Activated CD4-positive, alpha-beta T cell treated with anti-CD3 and anti-CD28 coated beads for 36 hours (primary cell): ENCODE measurements at regions of chr9 and their contacts with region 1.

Region 1: DNA sequence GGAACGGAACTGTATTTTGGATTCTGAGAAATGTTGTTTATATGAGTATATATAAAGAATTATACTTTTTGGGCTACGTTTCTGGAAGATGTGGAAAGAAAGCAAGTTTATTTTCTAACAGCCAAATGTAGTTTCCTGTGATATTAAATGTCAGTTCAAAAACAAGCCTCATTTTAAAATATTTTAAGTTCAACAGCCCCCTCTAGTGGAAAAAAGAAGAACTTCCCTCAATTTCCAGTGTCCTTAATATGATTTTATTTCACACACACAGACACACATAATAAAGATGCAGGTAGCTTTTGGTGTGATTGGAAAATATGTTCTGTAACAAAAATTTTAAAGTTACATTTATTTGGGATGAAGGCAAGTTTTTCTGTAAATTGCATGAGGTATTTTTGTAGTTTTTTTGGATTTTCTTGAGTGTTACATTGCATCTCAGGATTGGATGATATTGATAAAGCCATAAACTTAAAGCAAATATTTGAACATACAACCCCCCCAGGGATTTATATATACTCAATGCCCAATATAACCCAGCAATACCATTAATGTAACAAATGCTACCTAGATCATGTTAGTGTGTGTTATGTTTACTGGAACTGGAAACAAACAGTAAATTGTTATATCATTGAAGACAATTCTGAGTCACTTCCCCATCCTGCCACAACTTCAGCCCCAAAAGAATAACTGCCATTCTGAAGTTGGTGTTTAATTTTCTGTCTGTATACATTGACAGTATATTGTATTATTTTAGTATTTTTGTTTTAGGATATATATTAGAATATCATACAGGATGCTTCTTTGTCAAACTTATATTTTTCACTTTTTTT is 54.0 kb downstream of the CCDC171 start:
- DNase-seq: no peak
- ATAC-seq: no peak
- H3K4me3 Mint-ChIP-seq: no peak overlapping the region
- H3K27ac Mint-ChIP-seq: no peak overlapping the region
- H3K4me1 Mint-ChIP-seq: no peaks in the 10 kb centered on the region
- H3K27me3 Mint-ChIP-seq: no peaks in the 10 kb centered on the region

Region 2: DNA sequence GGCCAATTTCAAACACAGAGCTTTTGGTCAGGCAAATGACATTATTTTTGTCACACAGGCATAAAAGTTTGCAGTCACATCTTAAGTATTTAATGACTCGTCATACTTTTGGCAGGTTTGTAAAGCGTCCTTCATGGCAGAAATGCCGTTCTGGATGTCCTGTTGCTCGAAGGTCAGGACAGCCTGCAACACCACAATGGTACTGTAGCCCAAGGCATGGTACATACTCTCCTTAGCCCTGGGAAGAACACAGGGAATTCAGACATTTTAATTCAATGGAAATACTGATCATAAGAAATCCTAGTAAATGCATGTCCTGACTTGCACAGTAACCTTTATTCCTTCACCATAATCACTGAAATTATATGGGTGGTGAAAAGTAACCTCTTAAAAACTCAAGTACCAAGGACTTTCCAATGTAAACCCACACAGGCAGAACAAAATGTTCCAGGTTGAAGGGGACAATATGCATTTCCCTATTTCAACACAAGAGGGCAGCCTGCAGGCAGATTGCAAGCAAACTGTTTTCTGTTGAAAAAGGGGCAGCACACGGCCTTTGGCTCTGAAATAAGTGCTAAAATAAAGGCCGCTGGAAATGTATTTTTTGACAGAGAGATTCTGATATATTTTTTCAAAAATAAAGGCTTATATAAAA is 395.6 kb before region 1 on chr9:
- CTCF ChIA-PET with region 1: interaction called, 8 read pairs
- POLR2A ChIA-PET with region 1: no interaction called
- intact Hi-C with region 1: loop called (anchors 1 kb)
- DNase-seq: peak; percentile 67
- ATAC-seq: peak; percentile 45
- H3K4me3 Mint-ChIP-seq: no peak overlapping the region
- H3K27ac Mint-ChIP-seq: no peak overlapping the region
- H3K4me1 Mint-ChIP-seq: peaks cover 23% of the 10 kb centered on the region
- H3K27me3 Mint-ChIP-seq: no peaks in the 10 kb centered on the region

Region 3: GRCh38 chr9:15357050-15357653 is 249.7 kb before region 1 on chr9:
- CTCF ChIA-PET with region 1: no interaction called
- POLR2A ChIA-PET with region 1: no interaction called
- intact Hi-C with region 1: loop called in 1 of 2 experiments (anchors 5 kb)
- DNase-seq: peak; percentile 68
- ATAC-seq: peak; percentile 88
- H3K4me3 Mint-ChIP-seq: no peak overlapping the region
- H3K27ac Mint-ChIP-seq: no peak overlapping the region
- H3K4me1 Mint-ChIP-seq: peaks cover 12% of the 10 kb centered on the region
- H3K27me3 Mint-ChIP-seq: no peaks in the 10 kb centered on the region

Region 4: DNA sequence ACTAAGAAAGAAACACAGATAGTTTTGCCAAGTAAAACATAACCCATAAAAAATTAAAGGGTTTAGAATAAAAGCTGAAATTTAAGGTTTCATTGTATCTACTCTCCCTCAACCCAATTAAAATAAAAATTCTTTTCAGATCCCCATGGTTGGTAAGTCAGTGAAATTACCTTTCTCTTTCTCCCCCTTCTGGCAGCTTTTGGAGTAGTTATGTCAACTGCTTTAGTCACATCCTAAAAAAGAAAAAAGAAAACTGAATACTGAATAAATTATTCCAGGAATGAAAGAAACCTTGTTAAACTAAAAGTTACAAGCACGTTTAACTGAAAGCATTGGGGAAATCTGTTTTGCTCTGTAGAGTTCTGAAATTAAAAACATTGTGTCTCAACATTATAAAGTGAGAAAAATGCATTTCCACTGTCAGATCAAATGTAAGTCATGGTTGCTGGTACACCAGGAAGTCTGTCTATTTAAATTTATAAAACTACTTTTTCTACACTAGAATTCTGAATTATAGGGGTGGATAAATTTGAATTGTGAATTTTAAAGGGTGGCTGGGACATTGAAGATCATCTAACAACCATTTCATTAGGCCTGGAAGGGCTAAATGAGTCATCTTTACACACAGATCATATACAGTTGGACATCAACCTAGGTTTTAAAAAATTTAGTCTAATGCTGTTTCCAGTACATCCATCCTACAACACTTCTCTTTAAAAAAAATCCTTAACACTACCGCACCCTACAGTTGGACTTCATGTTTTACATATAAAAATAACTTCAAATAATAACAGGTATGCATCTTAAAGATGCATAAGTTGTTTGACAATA is 120.8 kb before region 1 on chr9:
- CTCF ChIA-PET with region 1: interaction called, 5 read pairs
- POLR2A ChIA-PET with region 1: no interaction called
- intact Hi-C with region 1: loop called in 1 of 2 experiments (anchors 5 kb)
- DNase-seq: no peak
- ATAC-seq: peak; percentile 61
- H3K4me3 Mint-ChIP-seq: no peak overlapping the region
- H3K27ac Mint-ChIP-seq: peak overlapping the region; percentile 72
- H3K4me1 Mint-ChIP-seq: peaks cover 41% of the 10 kb centered on the region
- H3K27me3 Mint-ChIP-seq: no peaks in the 10 kb centered on the region

Region 5: DNA sequence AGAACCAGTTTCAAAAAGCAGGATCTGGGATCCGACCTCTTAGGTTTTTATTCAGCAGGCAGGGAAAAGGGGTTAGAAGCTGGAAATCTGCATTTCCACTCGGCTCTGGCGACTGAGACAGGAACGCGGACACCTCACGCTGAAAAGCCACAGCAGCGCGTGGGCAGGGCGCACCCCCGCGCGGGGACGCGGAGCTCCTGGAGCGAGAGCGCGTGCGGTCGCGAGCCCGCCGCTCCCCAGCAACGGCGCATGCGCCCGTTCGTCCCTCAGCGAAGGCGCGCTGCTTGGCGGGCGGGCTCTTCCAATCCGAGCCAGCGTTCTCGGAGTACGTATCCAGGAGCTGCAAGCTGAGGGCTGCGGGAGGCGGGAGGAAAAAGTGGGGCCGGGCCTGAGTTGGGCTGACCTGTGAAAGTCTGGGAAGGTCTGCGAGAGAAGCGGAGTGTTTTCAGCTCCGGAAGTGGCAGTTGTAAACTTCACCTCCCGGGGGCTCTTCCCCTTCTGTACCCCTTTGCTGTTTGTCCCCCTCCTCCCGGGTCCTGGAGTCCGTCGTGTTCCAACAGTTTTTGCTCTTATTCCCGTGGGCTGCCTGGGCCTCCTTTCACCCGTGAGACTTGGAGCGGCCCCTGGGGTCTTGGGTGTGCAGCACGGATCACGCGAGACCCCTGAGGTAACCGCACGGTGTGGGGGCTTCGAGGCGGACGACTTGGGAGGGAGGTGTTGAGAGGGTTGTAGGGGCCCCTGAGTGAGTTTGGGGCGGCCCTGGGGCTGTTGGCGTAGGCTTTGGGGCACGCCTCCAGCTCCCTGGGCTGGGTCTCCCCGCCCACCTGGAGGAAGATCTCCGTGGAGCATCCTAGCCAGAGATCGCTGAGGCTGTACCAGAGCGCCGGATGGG is 54.0 kb before region 1 on chr9 and contains the start of gene CCDC171:
- CTCF ChIA-PET with region 1: interaction called, 13 read pairs
- POLR2A ChIA-PET with region 1: no interaction called
- intact Hi-C with region 1: loop called (anchors 1 to 5 kb)
- DNase-seq: peak; percentile 93
- ATAC-seq: peak; percentile 91
- H3K4me3 Mint-ChIP-seq: peak within 1 kb of the TSS; percentile 79
- H3K27ac Mint-ChIP-seq: peak within 1 kb of the TSS; percentile 80
- H3K4me1 Mint-ChIP-seq: peaks cover 9% of the 10 kb centered on the region
- H3K27me3 Mint-ChIP-seq: no peaks in the 10 kb centered on the region
- total RNA-seq, gene CCDC171: 2.8 to 2.9 TPM